GM12878 (cell line): ENCODE measurements at regions of chr6 and their contacts with region 1.

Region 1: DNA sequence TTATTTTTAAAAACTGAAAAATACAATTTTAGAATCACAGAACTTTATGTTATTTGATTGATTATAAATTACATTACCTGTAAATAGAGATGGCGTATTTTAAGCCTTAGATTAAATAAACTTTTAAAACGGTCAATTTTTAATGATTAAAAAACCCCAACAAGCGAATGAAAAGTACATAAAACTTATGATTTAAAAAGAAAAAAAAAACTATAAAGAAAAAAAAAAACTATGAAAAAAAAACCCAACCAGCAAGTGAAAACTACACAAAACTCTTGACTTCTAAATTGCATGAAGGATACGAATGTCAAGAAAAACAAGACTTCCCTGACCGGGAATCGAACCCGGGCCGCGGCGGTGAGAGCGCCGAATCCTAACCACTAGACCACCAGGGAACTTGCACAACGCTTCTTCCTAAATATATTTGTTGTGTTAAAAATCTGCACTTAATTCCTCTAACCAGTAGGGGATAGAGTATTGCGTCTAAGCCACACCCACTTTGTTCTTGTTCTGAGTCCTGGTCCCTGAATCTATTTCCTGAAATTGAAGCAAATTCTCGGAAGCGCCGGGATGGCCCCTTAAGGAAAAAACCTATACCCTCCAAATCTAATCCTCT is 10.7 kb upstream of the NCOA7 start:
- DNase-seq: peak; percentile 92
- ATAC-seq: peak; percentile 86
- H3K4me3 ChIP-seq: peak overlapping the region; percentile 73
- H3K27ac ChIP-seq: peak overlapping the region; percentile 91
- H3K4me1 ChIP-seq: peaks cover 4% of the 10 kb centered on the region; the same call in 1 of the 2 replicates
- H3K27me3 ChIP-seq: no peaks in the 10 kb centered on the region
- CTCF ChIP-seq: peak in 1 of 3 experiments; percentile 20; a peak in 1 of 6 replicates
- EP300 ChIP-seq: peak in 1 of 2 experiments; percentile 84; a peak in 1 of 4 replicates
- POLR2A ChIP-seq: no peak
- RAD21 ChIP-seq: no peak

Region 2: GRCh38 chr6:125640441-125641150 is 139.4 kb before region 1 on chr6:
- CTCF ChIA-PET with region 1: no interaction called
- POLR2A ChIA-PET with region 1: no interaction called
- RAD21 ChIA-PET with region 1: no interaction called
- SMC1A ChIA-PET with region 1: no interaction called
- in situ Hi-C with region 1: no loop called
- intact Hi-C with region 1: no loop called
- DNase-seq: no peak
- ATAC-seq: no peak
- H3K4me3 ChIP-seq: no peak overlapping the region
- H3K27ac ChIP-seq: no peak overlapping the region
- H3K4me1 ChIP-seq: no peaks in the 10 kb centered on the region
- H3K27me3 ChIP-seq: no peaks in the 10 kb centered on the region; a peak in 1 of 4 replicates
- CTCF ChIP-seq: no peak
- EP300 ChIP-seq: no peak
- POLR2A ChIP-seq: no peak
- RAD21 ChIP-seq: no peak

Region 3: GRCh38 chr6:125790358-125791150 is 10.5 kb after region 1 on chr6 and contains the start of gene NCOA7:
- CTCF ChIA-PET with region 1: interaction called, 120 read pairs
- POLR2A ChIA-PET with region 1: interaction called, 55 read pairs
- RAD21 ChIA-PET with region 1: interaction called, 101 read pairs
- SMC1A ChIA-PET with region 1: interaction called, 110 read pairs
- in situ Hi-C with region 1: no loop called
- intact Hi-C with region 1: loop called (anchors 1 kb)
- DNase-seq: no peak
- ATAC-seq: peak; percentile 83
- H3K4me3 ChIP-seq: peak within 1 kb of the TSS; percentile 91
- H3K27ac ChIP-seq: peak within 1 kb of the TSS; percentile 91
- H3K4me1 ChIP-seq: peaks cover 24% of the 10 kb centered on the region
- H3K27me3 ChIP-seq: no peaks in the 10 kb centered on the region
- CTCF ChIP-seq: no peak
- EP300 ChIP-seq: no peak
- POLR2A ChIP-seq: peak; percentile 85
- RAD21 ChIP-seq: no peak
- polyA plus RNA-seq, gene NCOA7: 18.9 to 28.8 TPM

Region 4: GRCh38 chr6:125812394-125813292 is 32.6 kb after region 1 on chr6:
- CTCF ChIA-PET with region 1: interaction called, 30 read pairs
- POLR2A ChIA-PET with region 1: interaction called, 9 read pairs
- RAD21 ChIA-PET with region 1: interaction called, 20 read pairs
- SMC1A ChIA-PET with region 1: interaction called, 31 read pairs
- in situ Hi-C with region 1: no loop called
- intact Hi-C with region 1: no loop called
- DNase-seq: no peak
- ATAC-seq: no peak
- H3K4me3 ChIP-seq: no peak overlapping the region
- H3K27ac ChIP-seq: no peak overlapping the region
- H3K4me1 ChIP-seq: peaks cover 68% of the 10 kb centered on the region
- H3K27me3 ChIP-seq: no peaks in the 10 kb centered on the region
- CTCF ChIP-seq: no peak
- EP300 ChIP-seq: no peak
- POLR2A ChIP-seq: no peak
- RAD21 ChIP-seq: no peak

Region 5: GRCh38 chr6:125888989-125889656 is 109.1 kb after region 1 on chr6:
- CTCF ChIA-PET with region 1: interaction called, 9 read pairs
- POLR2A ChIA-PET with region 1: no interaction called
- RAD21 ChIA-PET with region 1: interaction called, 13 read pairs
- SMC1A ChIA-PET with region 1: interaction called, 19 read pairs
- in situ Hi-C with region 1: no loop called
- intact Hi-C with region 1: no loop called
- DNase-seq: no peak
- ATAC-seq: peak; percentile 66
- H3K4me3 ChIP-seq: no peak overlapping the region
- H3K27ac ChIP-seq: no peak overlapping the region
- H3K4me1 ChIP-seq: no peaks in the 10 kb centered on the region
- H3K27me3 ChIP-seq: no peaks in the 10 kb centered on the region
- CTCF ChIP-seq: peak; percentile 46 to 52 (median 50)
- EP300 ChIP-seq: no peak
- POLR2A ChIP-seq: no peak
- RAD21 ChIP-seq: peak; percentile 51

Region 6: DNA sequence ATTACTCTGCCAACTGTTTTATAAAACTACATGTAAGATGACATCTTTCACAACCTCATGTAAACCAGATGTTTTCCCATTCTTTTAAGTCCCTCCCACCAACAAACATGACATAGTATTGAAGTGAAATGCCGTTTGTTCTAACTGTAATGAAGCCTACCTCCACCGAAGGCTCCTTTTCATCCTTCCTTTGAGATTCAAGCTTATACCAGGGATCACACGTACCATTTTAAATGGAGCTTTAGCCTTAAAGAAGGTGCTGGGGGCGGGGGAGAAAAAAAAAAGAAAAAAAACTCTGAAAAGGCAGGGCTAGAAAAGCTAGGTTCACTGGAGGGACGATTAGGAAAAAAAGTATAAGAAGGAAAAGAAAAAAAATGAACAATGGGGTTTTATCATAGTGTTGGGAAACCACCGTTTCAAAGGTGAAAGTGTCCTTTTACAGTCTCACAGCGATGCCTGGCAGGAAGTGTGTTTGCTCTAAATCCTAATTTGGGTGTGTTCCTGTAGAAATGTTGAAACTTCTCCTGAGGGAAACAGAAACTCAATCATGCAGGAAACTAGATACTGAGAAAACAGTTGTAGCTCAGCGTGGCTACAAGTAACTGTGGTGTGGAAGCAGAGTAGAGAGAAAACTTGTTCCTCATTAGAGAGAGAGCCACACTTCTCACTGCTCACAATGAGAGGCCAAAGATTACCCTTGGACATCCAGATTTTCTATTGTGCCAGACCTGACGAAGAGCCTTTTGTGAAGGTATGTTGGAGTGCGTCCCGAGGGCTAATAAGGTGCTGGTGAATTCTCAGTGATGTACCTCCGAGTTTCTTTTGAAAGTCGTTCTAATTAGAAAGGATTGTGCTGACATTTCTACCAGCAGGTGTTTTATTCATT is 138.9 kb after region 1 on chr6:
- CTCF ChIA-PET with region 1: interaction called, 19 read pairs
- POLR2A ChIA-PET with region 1: interaction called, 6 read pairs
- RAD21 ChIA-PET with region 1: interaction called, 21 read pairs
- SMC1A ChIA-PET with region 1: interaction called, 9 read pairs
- in situ Hi-C with region 1: no loop called
- intact Hi-C with region 1: no loop called
- DNase-seq: peak; percentile 93
- ATAC-seq: peak; percentile 94
- H3K4me3 ChIP-seq: peak overlapping the region; percentile 62
- H3K27ac ChIP-seq: peak overlapping the region; percentile 96
- H3K4me1 ChIP-seq: peaks cover 8% of the 10 kb centered on the region
- H3K27me3 ChIP-seq: no peaks in the 10 kb centered on the region
- CTCF ChIP-seq: no peak
- EP300 ChIP-seq: 0 out of 4 replicates have a peak, but pooled peaks have one; percentile 11 to 25
- POLR2A ChIP-seq: peak; percentile 72
- RAD21 ChIP-seq: no peak

Region 7: DNA sequence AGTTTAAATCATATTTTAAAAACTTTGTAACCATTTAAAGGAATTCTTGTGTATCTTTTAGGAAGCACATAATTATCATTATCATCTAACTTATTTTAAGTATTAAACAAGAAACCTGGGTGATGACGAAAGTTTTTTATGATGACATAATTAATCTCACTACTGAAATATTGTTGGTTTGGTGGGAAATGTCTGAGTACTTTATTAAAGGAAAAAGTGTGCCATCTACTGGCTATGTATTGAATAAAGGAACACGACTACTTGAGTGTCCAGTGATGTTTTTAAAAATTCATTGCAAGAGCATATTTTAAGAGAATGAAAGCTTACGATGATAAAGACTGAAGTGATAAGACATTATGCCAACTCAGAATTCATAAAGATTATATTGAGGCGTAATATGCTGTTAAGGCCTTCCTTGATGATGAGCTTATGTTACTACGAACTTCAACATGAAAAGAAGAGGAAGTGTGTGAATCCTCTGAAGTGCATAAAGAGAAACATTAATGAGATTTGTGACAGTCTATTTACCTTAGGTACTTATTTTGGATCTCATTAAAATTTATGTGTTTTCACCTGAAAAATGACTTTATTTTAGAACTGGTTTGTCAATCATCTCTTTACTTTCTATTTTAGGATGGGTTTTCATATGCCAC is 194.3 kb after region 1 on chr6:
- CTCF ChIA-PET with region 1: interaction called, 40 read pairs
- POLR2A ChIA-PET with region 1: interaction called, 5 read pairs
- RAD21 ChIA-PET with region 1: interaction called, 55 read pairs
- SMC1A ChIA-PET with region 1: interaction called, 47 read pairs
- in situ Hi-C with region 1: no loop called
- intact Hi-C with region 1: loop called (anchors 1 kb)
- DNase-seq: no peak
- ATAC-seq: peak; percentile 93
- H3K4me3 ChIP-seq: no peak overlapping the region
- H3K27ac ChIP-seq: no peak overlapping the region
- H3K4me1 ChIP-seq: no peaks in the 10 kb centered on the region
- H3K27me3 ChIP-seq: no peaks in the 10 kb centered on the region
- CTCF ChIP-seq: peak; percentile 21 to 57 (median 49); a peak in 3 of 6 replicates
- EP300 ChIP-seq: no peak
- POLR2A ChIP-seq: no peak
- RAD21 ChIP-seq: peak; percentile 48

Region 8: GRCh38 chr6:126030045-126030444 is 250.0 kb after region 1 on chr6:
- CTCF ChIA-PET with region 1: no interaction called
- POLR2A ChIA-PET with region 1: no interaction called
- RAD21 ChIA-PET with region 1: no interaction called
- SMC1A ChIA-PET with region 1: no interaction called
- in situ Hi-C with region 1: no loop called
- intact Hi-C with region 1: no loop called
- DNase-seq: no peak
- ATAC-seq: no peak
- H3K4me3 ChIP-seq: no peak overlapping the region
- H3K27ac ChIP-seq: no peak overlapping the region
- H3K4me1 ChIP-seq: no peaks in the 10 kb centered on the region
- H3K27me3 ChIP-seq: no peaks in the 10 kb centered on the region
- CTCF ChIP-seq: no peak
- EP300 ChIP-seq: no peak
- POLR2A ChIP-seq: no peak
- RAD21 ChIP-seq: no peak

Region 9: DNA sequence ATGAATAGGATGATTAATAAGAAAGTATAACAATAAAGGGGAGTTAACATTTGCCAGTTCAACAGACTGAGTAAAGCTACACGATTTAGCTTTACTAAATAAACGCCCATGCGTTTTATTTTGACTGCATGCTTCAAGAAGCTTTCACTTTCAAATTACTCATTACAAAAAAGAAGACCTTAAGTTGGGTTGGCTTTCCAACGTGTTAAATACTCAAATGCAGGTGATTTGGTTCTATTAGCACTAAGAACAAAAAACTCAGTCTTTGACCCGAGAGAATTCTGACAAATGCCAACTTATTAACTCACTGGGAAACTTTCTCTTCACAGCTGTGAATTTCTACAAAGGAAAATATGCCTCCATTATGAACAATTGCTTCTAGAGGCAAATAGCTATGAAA is 1511.5 kb after region 1 on chr6:
- CTCF ChIA-PET with region 1: no interaction called
- POLR2A ChIA-PET with region 1: no interaction called
- RAD21 ChIA-PET with region 1: no interaction called
- SMC1A ChIA-PET with region 1: no interaction called
- in situ Hi-C with region 1: loop called (anchors 25 kb)
- intact Hi-C with region 1: no loop called
- DNase-seq: peak; percentile 39
- ATAC-seq: peak; percentile 95
- H3K4me3 ChIP-seq: no peak overlapping the region
- H3K27ac ChIP-seq: peak overlapping the region; percentile 15; the same call in 1 of the 2 replicates
- H3K4me1 ChIP-seq: peaks cover 13% of the 10 kb centered on the region; the same call in 1 of the 2 replicates
- H3K27me3 ChIP-seq: no peaks in the 10 kb centered on the region
- CTCF ChIP-seq: no peak
- EP300 ChIP-seq: peak in 1 of 2 experiments; percentile 50; a peak in 1 of 4 replicates
- POLR2A ChIP-seq: no peak
- RAD21 ChIP-seq: no peak